Adrenal gland (tissue), 19 donors: ENCODE measurements at regions of chr10 and their contacts with region 1.

Region 1: DNA sequence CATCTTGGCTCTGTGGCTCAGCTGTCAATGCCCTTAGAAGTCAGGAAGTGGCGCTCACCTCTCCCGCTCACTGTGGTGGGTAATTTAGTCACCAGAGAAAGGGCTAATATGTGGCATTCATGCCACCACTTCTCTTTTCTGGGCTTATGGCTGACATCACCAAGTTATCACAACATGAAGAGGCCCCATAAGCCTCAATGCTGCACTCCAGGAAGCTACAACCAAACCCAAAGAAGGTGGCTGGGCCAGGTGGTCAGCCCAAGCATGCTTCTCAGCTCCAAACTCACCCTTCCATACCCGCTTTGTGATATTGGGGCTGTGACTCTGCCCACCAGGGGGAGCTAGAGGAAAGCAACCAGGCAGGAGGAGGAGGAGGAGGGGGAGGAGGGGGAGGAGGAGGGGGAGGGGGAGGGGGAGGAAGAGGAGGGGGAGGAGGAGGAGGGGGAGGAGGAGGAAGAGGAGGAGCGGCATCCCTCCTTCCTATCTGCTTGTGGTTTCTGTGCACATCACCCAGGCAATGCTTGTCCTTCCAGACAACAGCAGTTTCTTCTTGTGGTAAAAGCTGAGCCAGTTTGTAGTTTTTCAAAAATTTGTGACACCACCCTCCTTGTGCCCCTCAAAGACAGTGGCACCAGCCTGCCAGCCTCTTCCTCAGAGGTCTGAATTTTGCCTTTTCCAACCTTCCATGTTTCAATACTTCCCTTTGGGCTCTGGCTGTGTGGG is 42.1 kb downstream of the CYP26A1 start:
- DNase-seq: peak; percentile 68 to 84 (median 74)
- H3K4me3 ChIP-seq: no peak overlapping the region
- H3K27ac ChIP-seq: no peak overlapping the region
- H3K4me1 ChIP-seq: no peaks in the 10 kb centered on the region
- H3K27me3 ChIP-seq: no peaks in the 10 kb centered on the region
- CTCF ChIP-seq: peak in 5 of 6 experiments; percentile 23 to 51 (median 40)
- POLR2A ChIP-seq: no peak

Region 2: DNA sequence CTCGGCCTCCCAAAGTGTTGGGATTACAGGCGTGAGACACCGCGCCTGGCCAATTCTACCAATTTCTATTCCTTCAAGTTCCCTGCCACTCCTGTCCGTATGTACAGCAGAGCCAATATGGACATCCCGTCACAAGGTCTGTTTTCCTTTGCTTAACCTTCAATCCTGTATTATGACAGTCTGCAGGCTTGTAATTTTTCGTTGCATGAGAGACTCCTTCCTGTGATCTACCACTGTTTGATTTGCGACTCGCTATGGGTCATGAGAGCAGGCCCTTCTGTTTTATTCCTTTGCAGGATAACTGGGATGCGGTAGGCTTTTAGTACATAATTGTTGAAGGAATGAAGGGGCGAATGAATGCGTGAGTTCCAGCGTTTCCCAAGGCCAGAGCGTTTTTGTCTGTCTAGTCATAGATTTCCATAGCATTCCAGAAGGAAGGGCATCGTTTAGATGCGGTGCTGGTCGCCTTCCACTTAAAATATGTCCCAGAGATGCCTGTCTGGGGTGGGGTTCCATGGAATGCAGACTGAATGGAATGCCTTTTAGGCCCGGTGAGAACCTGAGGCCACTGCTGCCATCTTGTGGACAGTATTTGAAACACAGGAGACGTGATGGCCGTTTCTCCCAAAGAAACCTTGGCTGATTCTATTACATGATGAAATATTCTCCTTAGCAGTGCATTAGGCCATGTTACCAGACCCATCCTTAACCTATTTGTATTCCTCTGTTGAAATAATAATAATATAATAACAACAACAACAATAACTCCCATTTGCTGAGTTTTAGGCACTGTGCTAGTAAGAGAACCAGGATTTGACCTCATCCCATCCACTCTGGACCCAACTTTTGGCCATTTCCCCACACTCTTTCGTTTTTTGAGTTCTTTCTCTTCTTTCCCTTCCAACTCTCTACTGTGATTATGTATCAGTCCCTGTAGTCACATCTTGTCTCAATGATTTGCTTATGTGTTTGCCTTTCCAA is 173.1 kb after region 1 on chr10:
- intact Hi-C with region 1: loop called (anchors 5 to 10 kb)
- DNase-seq: peak; percentile 66 to 90 (median 72)
- H3K4me3 ChIP-seq: no peak overlapping the region
- H3K27ac ChIP-seq: peak overlapping the region in 1 of 5 donors; percentile 40
- H3K4me1 ChIP-seq: no peaks in the 10 kb centered on the region
- H3K27me3 ChIP-seq: no peaks in the 10 kb centered on the region
- CTCF ChIP-seq: peak; percentile 75 to 88 (median 84)
- POLR2A ChIP-seq: no peak